Naive thymus-derived CD4-positive, alpha-beta T cell (primary cell): ENCODE measurements at regions of chrX and their contacts with region 1.

Region 1: DNA sequence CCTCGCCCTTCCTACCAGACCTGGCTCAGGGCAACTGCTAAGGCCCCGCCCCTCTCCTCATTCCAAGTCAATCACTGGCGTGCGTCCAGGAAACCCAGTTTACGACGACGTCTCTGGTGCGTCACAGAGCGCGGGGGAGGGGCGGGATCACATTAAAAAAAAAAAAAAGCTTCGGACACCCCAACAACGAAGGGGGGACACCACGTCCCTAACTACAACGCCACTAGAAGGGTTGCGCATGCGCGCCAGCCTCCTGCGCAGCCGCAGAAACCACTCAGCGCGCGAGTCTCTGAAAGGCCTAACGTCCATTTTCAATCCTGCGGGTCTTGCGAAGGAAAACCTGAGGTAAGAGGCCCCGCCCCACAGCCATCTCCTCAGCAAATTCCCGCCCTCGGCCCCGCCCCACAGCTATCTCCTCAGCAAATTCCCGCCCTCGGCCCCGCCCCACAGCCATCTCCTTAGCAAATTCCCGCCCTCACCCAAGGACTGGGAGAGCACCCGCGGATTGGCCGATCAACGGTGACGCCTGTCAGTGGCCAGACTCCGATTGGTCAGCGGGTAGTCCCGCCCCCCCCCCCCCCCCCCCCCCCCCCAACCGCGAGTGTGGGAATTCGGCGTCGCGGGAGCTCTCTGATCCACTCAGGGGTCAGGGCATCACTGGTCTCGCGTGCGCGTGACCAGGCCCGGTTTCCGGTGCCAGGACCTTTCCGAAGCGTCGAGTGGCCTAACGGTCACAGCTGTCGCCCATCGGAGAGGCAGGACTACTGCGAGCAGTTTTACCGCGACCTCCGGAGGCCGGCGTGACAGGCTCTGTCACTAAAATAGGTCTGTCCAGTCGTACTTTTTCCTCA is at the start of gene SCML1:
- DNase-seq: peak; percentile 70 to 91 (median 85)
- ATAC-seq: peak; percentile 88
- H3K4me3 ChIP-seq: peak within 1 kb of the TSS; percentile 73
- H3K4me3 Mint-ChIP-seq: peak within 1 kb of the TSS; percentile 84 to 98 (median 94)
- H3K27ac ChIP-seq: peak within 1 kb of the TSS; percentile 88
- H3K27ac Mint-ChIP-seq: peak within 1 kb of the TSS; percentile 75 to 98 (median 98)
- H3K4me1 ChIP-seq: peaks cover 0 to 5% of the 10 kb centered on the region in 2 donors
- H3K4me1 Mint-ChIP-seq: peaks cover 13 to 37% (median 29%) of the 10 kb centered on the region in 7 donors
- H3K27me3 ChIP-seq: no peaks in the 10 kb centered on the region
- H3K27me3 Mint-ChIP-seq: peaks cover 0 to 42% (median 0%) of the 10 kb centered on the region in 5 donors
- total RNA-seq, gene SCML1: 0.82 to 50.1 (median 28.5) TPM

Region 2: GRCh38 chrX:16786139-16786790 is 950.8 kb before region 1 on chrX and contains the start of gene TXLNG:
- CTCF ChIA-PET with region 1: no interaction called
- POLR2A ChIA-PET with region 1: no interaction called
- intact Hi-C with region 1: loop called in 1 of 2 experiments (anchors 2 kb)
- DNase-seq: peak; percentile 81 to 98 (median 97)
- ATAC-seq: peak; percentile 97
- H3K4me3 ChIP-seq: peak within 1 kb of the TSS; percentile 94
- H3K4me3 Mint-ChIP-seq: peak within 1 kb of the TSS; percentile 95 to 99 (median 97)
- H3K27ac ChIP-seq: peak within 1 kb of the TSS; percentile 88
- H3K27ac Mint-ChIP-seq: peak within 1 kb of the TSS; percentile 78 to 94 (median 90)
- H3K4me1 ChIP-seq: peaks cover 0 to 3% of the 10 kb centered on the region in 2 donors
- H3K4me1 Mint-ChIP-seq: peaks cover 4 to 42% (median 12%) of the 10 kb centered on the region in 7 donors
- H3K27me3 ChIP-seq: no peaks in the 10 kb centered on the region
- H3K27me3 Mint-ChIP-seq: no peaks in the 10 kb centered on the region
- total RNA-seq, gene TXLNG: 11.9 to 23.1 (median 17.3) TPM

Region 3: DNA sequence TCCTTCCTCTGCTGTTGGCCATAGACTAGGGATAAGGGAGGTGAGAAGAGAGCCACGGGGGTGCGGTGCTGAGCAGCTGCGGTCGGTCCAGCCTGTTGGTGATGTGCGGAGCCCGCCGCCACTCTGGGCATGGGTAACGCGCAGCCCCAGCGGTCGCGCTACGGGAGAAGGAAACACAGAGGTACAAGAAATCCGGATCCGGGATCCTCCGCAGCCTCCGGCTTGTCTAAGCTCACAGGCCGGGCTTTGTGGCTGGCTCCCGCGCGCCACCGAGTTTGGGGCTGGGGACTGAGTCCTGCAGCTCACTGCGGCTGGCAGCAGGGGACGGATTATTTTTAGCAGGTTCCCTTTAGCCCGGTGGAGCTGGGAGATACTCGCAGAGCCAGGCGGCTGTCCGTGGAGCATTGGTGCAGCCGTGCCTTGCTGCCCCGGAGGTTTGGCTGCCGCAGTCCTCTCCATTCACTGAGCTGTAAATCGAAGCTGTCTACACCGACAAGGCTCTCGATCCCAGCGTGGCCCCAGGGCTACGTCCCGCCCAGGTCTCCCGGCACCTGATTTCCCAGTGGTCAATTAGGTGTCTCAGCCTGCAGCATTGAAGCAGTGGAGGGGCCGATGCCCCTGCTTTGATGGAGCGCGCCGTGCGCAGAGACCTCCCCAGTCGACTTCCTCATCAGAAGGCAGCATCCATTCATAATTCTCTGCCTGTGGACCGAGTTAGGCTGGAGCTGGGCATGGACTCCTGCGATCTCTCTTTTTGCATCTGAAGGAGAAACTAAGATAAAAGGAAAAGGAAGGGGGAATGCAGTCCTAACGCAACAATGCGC is 81.7 kb before region 1 on chrX:
- CTCF ChIA-PET with region 1: no interaction called
- POLR2A ChIA-PET with region 1: no interaction called
- intact Hi-C with region 1: loop called in 1 of 2 experiments (anchors 5 kb)
- DNase-seq: peak in 3 of 9 donors; percentile 4 to 24 (median 8)
- ATAC-seq: peak; percentile 40
- H3K4me3 ChIP-seq: peak overlapping the region; percentile 30
- H3K4me3 Mint-ChIP-seq: peak overlapping the region; percentile 74 to 92 (median 88)
- H3K27ac ChIP-seq: no peak overlapping the region
- H3K27ac Mint-ChIP-seq: peak overlapping the region in 6 of 9 donors; percentile 4 to 89 (median 46)
- H3K4me1 ChIP-seq: peaks cover 7 to 20% of the 10 kb centered on the region in 2 donors
- H3K4me1 Mint-ChIP-seq: peaks cover 8 to 32% (median 29%) of the 10 kb centered on the region in 7 donors
- H3K27me3 ChIP-seq: no peaks in the 10 kb centered on the region
- H3K27me3 Mint-ChIP-seq: no peaks in the 10 kb centered on the region

Region 4: DNA sequence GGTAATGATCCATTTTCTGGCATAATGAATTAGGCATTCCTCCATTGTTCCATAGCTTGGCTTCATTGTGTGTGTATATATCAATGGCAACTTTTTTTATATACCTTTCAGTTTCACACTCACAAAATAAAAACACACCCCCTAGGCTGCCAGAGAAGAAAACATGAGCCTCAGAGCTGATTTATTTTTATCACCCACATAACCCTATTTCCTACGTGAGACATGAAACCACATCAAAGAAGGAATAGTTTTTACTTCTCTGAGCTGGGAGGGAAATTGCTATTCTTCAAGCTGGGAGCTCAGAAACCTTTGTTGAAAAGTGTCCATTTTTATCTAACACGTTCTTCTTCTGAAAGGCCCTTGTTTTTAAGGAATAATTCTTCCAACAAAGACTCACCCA is 250.7 kb after region 1 on chrX:
- CTCF ChIA-PET with region 1: no interaction called
- POLR2A ChIA-PET with region 1: no interaction called
- intact Hi-C with region 1: loop called in 1 of 2 experiments (anchors 5 kb)
- DNase-seq: peak in 7 of 9 donors; percentile 50 to 80 (median 68)
- ATAC-seq: peak; percentile 85
- H3K4me3 ChIP-seq: no peak overlapping the region
- H3K4me3 Mint-ChIP-seq: peak overlapping the region in 8 of 10 donors; percentile 23 to 80 (median 68)
- H3K27ac ChIP-seq: no peak overlapping the region
- H3K27ac Mint-ChIP-seq: peak overlapping the region in 7 of 9 donors; percentile 41 to 89 (median 77)
- H3K4me1 ChIP-seq: peaks cover 0 to 27% of the 10 kb centered on the region in 2 donors
- H3K4me1 Mint-ChIP-seq: peaks cover 6 to 39% (median 32%) of the 10 kb centered on the region in 7 donors
- H3K27me3 ChIP-seq: no peaks in the 10 kb centered on the region
- H3K27me3 Mint-ChIP-seq: no peaks in the 10 kb centered on the region

Region 5: DNA sequence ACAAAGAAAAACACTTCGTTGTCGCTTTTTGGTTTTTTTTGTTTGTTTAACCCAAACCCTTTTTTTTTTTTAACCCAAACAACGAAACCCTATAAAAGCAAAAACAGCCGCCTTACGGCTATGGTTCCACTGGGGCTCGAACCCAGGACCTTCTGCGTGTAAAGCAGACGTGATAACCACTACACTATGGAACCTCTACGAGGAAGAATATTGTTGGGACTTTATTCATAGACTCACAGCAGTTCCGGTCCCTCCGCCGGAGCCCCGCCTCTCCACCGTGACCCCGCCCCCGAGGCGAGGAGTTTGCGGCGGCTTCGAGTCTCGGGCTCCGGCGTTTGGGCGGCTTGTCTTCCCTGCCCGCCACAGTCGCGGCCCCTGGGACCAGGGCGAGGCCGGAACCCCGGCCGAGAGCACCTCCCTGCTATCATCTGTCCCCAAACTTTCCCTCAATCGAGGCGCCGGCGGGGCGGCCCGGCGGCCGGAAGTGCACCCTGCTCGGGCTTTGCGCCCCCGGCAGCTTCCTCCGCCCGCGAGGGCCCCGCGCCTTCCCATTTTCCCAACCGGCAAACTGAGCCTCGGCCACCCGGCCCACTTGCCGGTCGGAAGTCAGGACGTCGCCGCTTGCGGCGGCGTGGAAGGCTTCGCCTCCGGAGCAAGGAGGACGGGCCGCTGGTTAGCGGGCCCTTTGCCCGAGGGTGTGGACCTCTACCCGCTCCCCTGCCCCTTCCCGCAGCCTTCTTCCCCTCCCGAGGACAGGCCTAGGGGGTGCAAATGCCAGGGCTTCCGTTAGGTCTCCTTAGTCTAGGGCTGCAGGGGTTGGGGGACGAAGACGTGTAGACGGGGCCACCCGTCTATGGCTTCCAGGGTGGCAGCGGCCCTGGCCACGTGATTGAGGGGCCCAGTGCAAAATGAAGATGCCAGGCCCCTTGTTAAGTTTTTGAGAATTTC is 938.0 kb after region 1 on chrX:
- CTCF ChIA-PET with region 1: no interaction called
- POLR2A ChIA-PET with region 1: no interaction called
- intact Hi-C with region 1: loop called (anchors 1 to 10 kb)
- DNase-seq: peak; percentile 76 to 89 (median 87)
- ATAC-seq: peak; percentile 96
- H3K4me3 ChIP-seq: peak overlapping the region; percentile 63
- H3K4me3 Mint-ChIP-seq: peak overlapping the region; percentile 74 to 87 (median 80)
- H3K27ac ChIP-seq: peak overlapping the region; percentile 82
- H3K27ac Mint-ChIP-seq: peak overlapping the region; percentile 71 to 95 (median 85)
- H3K4me1 ChIP-seq: no peaks in the 10 kb centered on the region
- H3K4me1 Mint-ChIP-seq: peaks cover 0 to 15% (median 8%) of the 10 kb centered on the region in 7 donors
- H3K27me3 ChIP-seq: no peaks in the 10 kb centered on the region
- H3K27me3 Mint-ChIP-seq: no peaks in the 10 kb centered on the region

Region 6: GRCh38 chrX:19343535-19344408 is 1606.7 kb after region 1 on chrX and contains the start of gene PDHA1:
- CTCF ChIA-PET with region 1: interaction called, 3 read pairs
- POLR2A ChIA-PET with region 1: no interaction called
- intact Hi-C with region 1: loop called (anchors 1 to 2 kb)
- DNase-seq: peak; percentile 73 to 94 (median 91)
- ATAC-seq: peak; percentile 99
- H3K4me3 ChIP-seq: peak within 1 kb of the TSS; percentile 71
- H3K4me3 Mint-ChIP-seq: peak within 1 kb of the TSS; percentile 79 to 90 (median 87)
- H3K27ac ChIP-seq: peak within 1 kb of the TSS; percentile 86
- H3K27ac Mint-ChIP-seq: peak within 1 kb of the TSS; percentile 82 to 95 (median 89)
- H3K4me1 ChIP-seq: peaks cover 6 to 9% of the 10 kb centered on the region in 2 donors
- H3K4me1 Mint-ChIP-seq: peaks cover 0 to 28% (median 14%) of the 10 kb centered on the region in 7 donors
- H3K27me3 ChIP-seq: no peaks in the 10 kb centered on the region
- H3K27me3 Mint-ChIP-seq: no peaks in the 10 kb centered on the region
- total RNA-seq, gene PDHA1: 113 to 123 (median 119) TPM